ENCODE measurements at regions of chr3 and their contacts with region 1.

Region 1: DNA sequence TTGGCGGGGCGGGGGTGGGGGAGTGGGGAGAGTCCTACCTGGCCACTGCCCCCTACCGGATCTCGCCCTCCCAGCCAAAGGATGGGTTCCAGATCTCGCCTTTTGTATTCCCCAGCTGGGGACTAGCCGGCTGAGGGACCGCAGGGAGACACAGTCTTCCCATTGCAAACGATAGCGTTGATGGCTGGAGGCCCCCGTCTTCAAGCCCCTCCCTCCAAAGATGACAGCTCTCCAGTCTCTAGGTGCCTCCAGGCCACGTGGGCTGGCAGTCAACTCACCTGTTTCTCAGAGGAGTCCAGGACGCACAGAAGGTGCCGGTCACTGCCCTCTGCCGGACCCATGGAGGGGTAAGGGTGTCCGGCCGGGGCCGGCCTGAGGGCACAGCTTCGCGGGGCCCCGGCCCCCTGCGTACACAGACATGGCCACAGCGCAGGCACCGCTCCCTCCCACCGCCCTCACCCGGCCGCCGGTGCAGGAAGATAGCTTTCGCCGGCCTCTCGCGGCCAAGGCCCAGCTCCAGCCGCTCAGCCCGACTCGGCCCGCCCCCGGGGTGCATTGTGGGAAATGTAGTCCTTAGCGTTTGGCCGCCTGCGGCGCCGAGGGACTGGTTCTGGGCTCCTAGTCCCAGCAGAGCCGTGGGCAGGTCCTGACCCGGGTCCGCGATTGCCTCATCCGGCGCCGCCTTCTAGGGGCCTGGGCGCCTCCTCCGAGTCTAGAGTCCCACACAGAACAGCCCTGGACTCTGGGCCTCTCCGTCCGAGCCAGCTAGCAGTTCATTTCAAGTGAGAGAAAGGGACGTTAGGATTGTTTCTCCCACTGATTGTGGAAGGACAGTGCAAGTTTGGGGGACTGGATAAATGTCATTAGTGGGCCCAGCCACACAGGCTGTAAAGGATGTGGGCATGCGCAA is at the start of gene MON1A:
- DNase-seq: no peak
- H3K4me3 ChIP-seq: peak within 1 kb of the TSS; percentile 86
- CTCF ChIP-seq: peak; percentile 25

Region 2: GRCh38 chr3:49719214-49719884 is 210.2 kb before region 1 on chr3 and contains the start of gene AMIGO3:
- CTCF ChIA-PET with region 1: no interaction called
- POLR2A ChIA-PET with region 1: no interaction called
- DNase-seq: peak; percentile 42
- H3K4me3 ChIP-seq: peak within 1 kb of the TSS; percentile 62
- CTCF ChIP-seq: peak; percentile 82

Region 3: GRCh38 chr3:49939858-49940666 is 10.5 kb after region 1 on chr3 and contains the start of gene RBM6:
- CTCF ChIA-PET with region 1: interaction called, 5 read pairs
- POLR2A ChIA-PET with region 1: interaction called, 42 read pairs
- DNase-seq: peak; percentile 81
- H3K4me3 ChIP-seq: peak within 1 kb of the TSS; percentile 96
- CTCF ChIP-seq: no peak